GM12878 (cell line): ENCODE measurements at regions of chr19 and their contacts with region 1.

Region 1: DNA sequence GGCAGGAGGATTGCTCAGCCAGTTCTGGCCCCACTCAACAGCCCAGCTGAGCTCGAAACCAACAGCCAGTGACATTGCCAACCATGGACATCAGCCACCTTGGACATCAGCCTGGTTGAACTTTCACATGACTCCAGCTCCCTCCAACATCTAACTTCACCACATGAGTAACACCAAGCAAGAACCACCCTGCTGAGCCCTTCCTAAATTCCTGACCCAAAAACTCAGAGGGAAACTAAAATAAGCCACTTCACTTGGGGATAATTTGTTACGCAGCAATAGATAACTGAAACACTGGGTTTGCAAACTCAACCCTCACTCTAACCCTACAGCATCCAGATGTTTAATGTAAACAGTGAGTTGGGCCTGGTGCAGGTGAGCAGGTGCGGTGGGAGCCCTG is 10.7 kb upstream of the LRFN3 start:
- DNase-seq: no peak
- ATAC-seq: no peak
- H3K4me3 ChIP-seq: no peak overlapping the region
- H3K27ac ChIP-seq: no peak overlapping the region
- H3K4me1 ChIP-seq: peaks cover 15% of the 10 kb centered on the region
- H3K27me3 ChIP-seq: no peaks in the 10 kb centered on the region
- CTCF ChIP-seq: no peak
- EP300 ChIP-seq: no peak
- POLR2A ChIP-seq: no peak
- RAD21 ChIP-seq: no peak

Region 2: DNA sequence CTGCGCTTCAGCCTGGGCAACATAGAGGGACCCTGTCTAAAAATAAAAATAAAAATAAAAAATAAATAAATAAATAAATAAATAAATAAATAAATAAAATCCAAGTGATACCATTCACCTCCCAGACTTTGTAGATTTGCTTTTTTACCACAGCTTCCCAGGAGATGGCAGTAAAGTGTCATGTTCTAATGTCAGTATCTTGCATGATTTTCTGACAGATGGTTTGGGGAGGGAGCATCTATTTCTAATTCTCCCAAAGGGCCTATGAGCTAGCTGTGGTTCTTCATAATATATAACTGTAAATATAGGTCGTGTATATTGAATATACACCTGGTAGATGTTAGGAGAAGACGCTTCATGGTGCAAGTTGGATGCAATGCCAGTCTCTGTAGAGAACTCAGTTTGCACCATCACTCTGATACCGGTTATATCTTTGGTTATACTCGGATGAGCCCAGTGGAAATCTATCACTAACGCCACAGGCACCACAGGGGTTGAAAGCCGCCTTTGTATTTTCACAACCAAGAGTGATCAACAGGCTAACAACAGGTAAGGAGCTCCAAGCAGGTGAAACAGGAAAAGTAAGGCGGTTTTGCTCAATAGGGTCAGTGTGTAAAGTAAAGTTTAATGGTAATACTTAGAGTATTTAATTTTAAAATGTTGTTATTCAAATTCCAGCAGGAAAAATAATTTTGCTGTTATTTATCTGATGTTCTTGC is 43.2 kb before region 1 on chr19:
- CTCF ChIA-PET with region 1: interaction called, 145 read pairs
- POLR2A ChIA-PET with region 1: interaction called, 12 read pairs
- RAD21 ChIA-PET with region 1: interaction called, 107 read pairs
- SMC1A ChIA-PET with region 1: interaction called, 90 read pairs
- in situ Hi-C with region 1: loop called (anchors 5 kb)
- intact Hi-C with region 1: no loop called
- DNase-seq: peak; percentile 33
- ATAC-seq: peak; percentile 55
- H3K4me3 ChIP-seq: no peak overlapping the region
- H3K27ac ChIP-seq: no peak overlapping the region
- H3K4me1 ChIP-seq: no peaks in the 10 kb centered on the region
- H3K27me3 ChIP-seq: no peaks in the 10 kb centered on the region
- CTCF ChIP-seq: peak; percentile 41 to 72 (median 54); a peak in 5 of 6 replicates
- EP300 ChIP-seq: no peak
- POLR2A ChIP-seq: no peak
- RAD21 ChIP-seq: peak; percentile 95

Region 3: GRCh38 chr19:35908973-35909683 is 16.4 kb before region 1 on chr19:
- CTCF ChIA-PET with region 1: interaction called, 13 read pairs
- POLR2A ChIA-PET with region 1: interaction called, 48 read pairs
- RAD21 ChIA-PET with region 1: interaction called, 37 read pairs
- SMC1A ChIA-PET with region 1: interaction called, 68 read pairs
- in situ Hi-C with region 1: no loop called
- intact Hi-C with region 1: no loop called
- DNase-seq: no peak
- ATAC-seq: peak; percentile 78
- H3K4me3 ChIP-seq: no peak overlapping the region
- H3K27ac ChIP-seq: peak overlapping the region; percentile 88
- H3K4me1 ChIP-seq: peaks cover 55% of the 10 kb centered on the region
- H3K27me3 ChIP-seq: no peaks in the 10 kb centered on the region
- CTCF ChIP-seq: no peak
- EP300 ChIP-seq: peak; percentile 64 to 77; a peak in 3 of 4 replicates
- POLR2A ChIP-seq: peak; percentile 39; the same call in 1 of the 2 replicates
- RAD21 ChIP-seq: no peak